SK-N-SH (cell line): ENCODE measurements at regions of chr7 and their contacts with region 1.

Region 1: GRCh38 chr7:80392229-80393169 is 119.4 kb downstream of the GNAT3 start:
- DNase-seq: peak; percentile 20
- H3K4me3 ChIP-seq: no peak overlapping the region
- H3K27ac ChIP-seq: peak overlapping the region in 1 of 2 experiments; percentile 16; a peak in 1 of 4 replicates
- H3K4me1 ChIP-seq: peaks cover 0 to 9% of the 10 kb centered on the region in 2 experiments; a peak in 2 of 4 replicates
- H3K27me3 ChIP-seq: no peaks in the 10 kb centered on the region
- CTCF ChIP-seq: peak; percentile 86
- EP300 ChIP-seq: no peak
- RAD21 ChIP-seq: peak; percentile 70

Region 2: GRCh38 chr7:80095545-80095944 is 297.0 kb before region 1 on chr7:
- CTCF ChIA-PET with region 1: interaction called, 16 read pairs
- POLR2A ChIA-PET with region 1: no interaction called
- DNase-seq: peak; percentile 21
- H3K4me3 ChIP-seq: no peak overlapping the region
- H3K27ac ChIP-seq: no peak overlapping the region
- H3K4me1 ChIP-seq: no peaks in the 10 kb centered on the region
- H3K27me3 ChIP-seq: no peaks in the 10 kb centered on the region
- CTCF ChIP-seq: peak; percentile 78
- EP300 ChIP-seq: no peak
- RAD21 ChIP-seq: peak; percentile 61

Region 3: GRCh38 chr7:80145780-80146422 is 246.6 kb before region 1 on chr7:
- CTCF ChIA-PET with region 1: interaction called, 14 read pairs
- POLR2A ChIA-PET with region 1: no interaction called
- DNase-seq: no peak
- H3K4me3 ChIP-seq: peak overlapping the region; percentile 15; a peak in 3 of 4 replicates
- H3K27ac ChIP-seq: peak overlapping the region; percentile 84 to 89
- H3K4me1 ChIP-seq: peaks cover 36 to 53% of the 10 kb centered on the region in 2 experiments
- H3K27me3 ChIP-seq: no peaks in the 10 kb centered on the region
- CTCF ChIP-seq: no peak
- EP300 ChIP-seq: no peak
- RAD21 ChIP-seq: no peak

Region 4: GRCh38 chr7:80379034-80379982 is 13.2 kb before region 1 on chr7:
- CTCF ChIA-PET with region 1: interaction called, 21 read pairs
- POLR2A ChIA-PET with region 1: no interaction called
- DNase-seq: no peak
- H3K4me3 ChIP-seq: no peak overlapping the region
- H3K27ac ChIP-seq: peak overlapping the region; percentile 73 to 85; a peak in 3 of 4 replicates
- H3K4me1 ChIP-seq: peaks cover 0 to 11% of the 10 kb centered on the region in 2 experiments; a peak in 3 of 4 replicates
- H3K27me3 ChIP-seq: no peaks in the 10 kb centered on the region
- CTCF ChIP-seq: no peak
- EP300 ChIP-seq: peak; percentile 65 to 98
- RAD21 ChIP-seq: no peak

Region 5: GRCh38 chr7:80403686-80404241 is 11.3 kb after region 1 on chr7:
- CTCF ChIA-PET with region 1: interaction called, 10 read pairs
- POLR2A ChIA-PET with region 1: interaction called, 3 read pairs
- DNase-seq: no peak
- H3K4me3 ChIP-seq: no peak overlapping the region
- H3K27ac ChIP-seq: no peak overlapping the region
- H3K4me1 ChIP-seq: peaks cover 0 to 6% of the 10 kb centered on the region in 2 experiments; a peak in 2 of 4 replicates
- H3K27me3 ChIP-seq: no peaks in the 10 kb centered on the region
- CTCF ChIP-seq: no peak
- EP300 ChIP-seq: no peak
- RAD21 ChIP-seq: no peak